Pancreas (tissue), 10 donors: ENCODE measurements at regions of chr3 and their contacts with region 1.

Region 1: GRCh38 chr3:24237971-24238767 is 256.5 kb downstream of the THRB start:
- DNase-seq: peak in 3 of 6 donors; percentile 25 to 57 (median 28)
- ATAC-seq: peak; percentile 59 to 84 (median 80)
- H3K4me3 ChIP-seq: no peak overlapping the region
- H3K27ac ChIP-seq: no peak overlapping the region
- H3K4me1 ChIP-seq: peaks cover 0 to 5% (median 4%) of the 10 kb centered on the region in 3 donors
- H3K27me3 ChIP-seq: no peaks in the 10 kb centered on the region
- CTCF ChIP-seq: peak; percentile 15 to 34 (median 31)

Region 2: DNA sequence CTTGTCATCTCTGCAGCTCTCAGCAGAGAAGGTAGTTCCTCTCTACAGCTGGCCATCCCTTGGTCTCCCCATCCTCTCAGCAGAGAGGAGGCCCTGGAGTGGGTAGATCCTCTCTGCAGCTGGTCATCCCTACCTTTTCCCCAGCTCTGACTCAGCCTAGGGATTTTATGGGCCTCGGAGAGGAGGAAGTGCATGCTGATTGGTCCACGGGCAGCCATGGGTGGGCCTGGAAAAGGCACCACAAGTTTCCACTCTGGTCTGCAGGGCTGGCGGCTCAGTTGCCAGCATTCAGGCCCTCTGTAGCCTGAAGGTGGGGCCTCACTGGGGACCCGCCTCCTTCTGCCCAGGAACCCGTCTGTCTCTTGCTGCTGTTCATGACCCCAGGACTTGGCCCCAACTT is 256.2 kb before region 1 on chr3:
- intact Hi-C with region 1: loop called in 1 of 3 experiments (anchors 10 kb)
- DNase-seq: no peak
- ATAC-seq: peak in 1 of 4 donors; percentile 49
- H3K4me3 ChIP-seq: no peak overlapping the region
- H3K27ac ChIP-seq: no peak overlapping the region
- H3K4me1 ChIP-seq: peaks cover 0 to 10% (median 6%) of the 10 kb centered on the region in 3 donors
- H3K27me3 ChIP-seq: no peaks in the 10 kb centered on the region
- CTCF ChIP-seq: no peak

Region 3: GRCh38 chr3:23999012-23999641 is 239.0 kb before region 1 on chr3:
- intact Hi-C with region 1: loop called in 1 of 3 experiments (anchors 10 kb)
- DNase-seq: peak in 5 of 6 donors; percentile 20 to 84 (median 66)
- ATAC-seq: peak in 3 of 4 donors; percentile 68 to 74 (median 71)
- H3K4me3 ChIP-seq: no peak overlapping the region
- H3K27ac ChIP-seq: no peak overlapping the region
- H3K4me1 ChIP-seq: no peaks in the 10 kb centered on the region
- H3K27me3 ChIP-seq: no peaks in the 10 kb centered on the region
- CTCF ChIP-seq: peak; percentile 52 to 84 (median 64)

Region 4: GRCh38 chr3:24185738-24186384 is 52.3 kb before region 1 on chr3:
- intact Hi-C with region 1: loop called in 1 of 3 experiments (anchors 10 kb)
- DNase-seq: peak in 5 of 6 donors; percentile 9 to 54 (median 31)
- ATAC-seq: peak; percentile 60 to 78 (median 78)
- H3K4me3 ChIP-seq: no peak overlapping the region
- H3K27ac ChIP-seq: no peak overlapping the region
- H3K4me1 ChIP-seq: peaks cover 0 to 13% (median 4%) of the 10 kb centered on the region in 3 donors
- H3K27me3 ChIP-seq: no peaks in the 10 kb centered on the region
- CTCF ChIP-seq: peak; percentile 41 to 53 (median 45)